Activated CD4-positive, alpha-beta memory T cell treated with anti-CD3 and anti-CD28 coated beads, Interleukin-2, amount 10 ng/mL, durations not matched to agents 7 days and 5 days (primary cell): ENCODE measurements at regions of chr19 and their contacts with region 1.

Region 1: DNA sequence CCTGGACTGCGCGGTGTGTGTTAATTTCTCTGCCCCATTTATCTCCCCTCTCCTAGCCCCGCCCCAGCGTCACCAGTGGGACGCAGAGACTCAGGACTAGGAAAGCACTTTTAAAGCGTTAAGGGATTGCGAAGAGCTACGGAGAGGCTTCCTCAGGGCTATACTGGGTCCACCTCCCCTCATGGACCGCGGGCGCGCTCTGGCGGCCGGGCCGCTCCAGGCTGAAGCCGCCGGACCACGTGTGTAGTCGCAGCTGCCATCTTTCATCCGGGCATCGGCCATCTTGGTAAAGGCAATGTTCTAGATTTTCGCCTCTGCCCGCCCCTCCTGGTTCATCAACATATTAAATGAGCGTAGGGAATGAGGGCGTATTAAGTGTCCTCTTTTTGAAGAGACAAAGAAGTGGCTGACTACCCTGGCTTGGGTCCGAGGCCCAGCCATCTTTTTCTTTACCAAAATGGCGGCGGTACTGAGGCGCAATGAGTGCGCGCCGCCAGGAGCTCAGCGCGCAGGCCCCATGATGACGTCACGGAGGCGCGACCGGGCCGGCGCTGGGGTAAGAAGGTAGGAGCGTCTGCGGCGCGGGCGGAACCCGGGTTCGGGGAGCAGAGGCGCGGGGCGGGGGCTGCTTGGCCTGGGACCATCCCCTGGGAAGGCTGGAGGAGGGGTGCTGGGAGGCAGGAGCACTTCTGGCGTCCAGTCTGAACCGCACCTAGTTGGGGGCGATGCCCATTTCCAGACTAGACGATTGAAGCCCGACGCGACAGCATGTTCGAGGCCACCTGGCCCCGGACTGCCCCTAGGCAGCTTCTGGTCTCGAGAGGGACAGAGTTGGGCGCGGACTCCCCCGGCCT is at the start of gene CCDC124:
- DNase-seq: peak; percentile 95
- H3K4me3 Mint-ChIP-seq: peak within 1 kb of the TSS; percentile 81
- H3K27ac Mint-ChIP-seq: peak within 1 kb of the TSS; percentile 87
- H3K4me1 Mint-ChIP-seq: peaks cover 36% of the 10 kb centered on the region
- H3K27me3 Mint-ChIP-seq: no peaks in the 10 kb centered on the region
- total RNA-seq, gene CCDC124: 59.3 to 60.8 TPM

Region 2: DNA sequence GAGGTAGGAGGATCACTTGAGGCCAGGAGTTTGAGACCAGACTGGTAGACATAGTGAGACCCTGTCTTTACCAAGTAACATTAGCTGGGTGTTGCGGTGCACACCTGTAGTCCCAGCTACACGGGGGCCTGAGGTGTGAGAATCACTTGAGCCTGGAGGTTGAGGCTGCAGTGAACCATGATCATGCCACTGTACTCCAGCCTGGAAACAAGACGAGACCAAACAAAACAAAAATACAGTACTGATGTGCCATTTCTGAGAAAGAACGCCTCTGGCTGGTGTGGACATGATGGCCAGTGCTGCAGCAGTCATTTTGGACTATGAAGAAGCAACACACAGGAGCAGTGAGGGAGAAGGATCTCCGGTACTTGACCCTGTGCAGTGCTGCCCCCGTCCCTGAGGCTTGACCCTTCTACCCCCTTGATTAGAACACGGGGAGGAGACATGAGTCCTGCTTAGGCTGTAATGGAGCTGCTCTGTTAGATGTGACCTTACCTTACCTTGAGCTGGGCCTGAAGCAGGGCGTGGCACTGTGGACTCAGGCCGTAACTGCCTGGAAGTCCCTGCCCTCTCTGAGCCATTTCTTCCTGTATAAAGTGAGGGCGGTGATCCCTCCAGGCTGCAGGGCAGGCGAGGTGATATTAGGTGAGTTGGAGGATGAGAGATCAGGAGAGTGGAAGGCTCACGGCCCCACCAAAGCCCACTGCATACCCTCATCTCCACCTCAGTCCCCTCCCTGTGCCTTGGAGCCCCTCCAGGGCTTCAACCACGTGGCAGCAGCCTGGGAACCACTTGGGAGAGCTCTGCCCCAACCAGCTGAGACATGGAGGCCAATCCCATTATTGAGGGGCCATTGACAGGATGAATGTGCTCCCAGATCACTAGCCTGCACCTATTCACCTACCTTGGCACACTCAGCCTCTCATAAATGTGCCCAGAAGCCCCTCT is 67.1 kb before region 1 on chr19:
- CTCF ChIA-PET with region 1: interaction called, 313 read pairs
- POLR2A ChIA-PET with region 1: interaction called, 131 read pairs
- DNase-seq: no peak
- H3K4me3 Mint-ChIP-seq: no peak overlapping the region
- H3K27ac Mint-ChIP-seq: peak overlapping the region; percentile 34
- H3K4me1 Mint-ChIP-seq: peaks cover 33% of the 10 kb centered on the region
- H3K27me3 Mint-ChIP-seq: no peaks in the 10 kb centered on the region

Region 3: DNA sequence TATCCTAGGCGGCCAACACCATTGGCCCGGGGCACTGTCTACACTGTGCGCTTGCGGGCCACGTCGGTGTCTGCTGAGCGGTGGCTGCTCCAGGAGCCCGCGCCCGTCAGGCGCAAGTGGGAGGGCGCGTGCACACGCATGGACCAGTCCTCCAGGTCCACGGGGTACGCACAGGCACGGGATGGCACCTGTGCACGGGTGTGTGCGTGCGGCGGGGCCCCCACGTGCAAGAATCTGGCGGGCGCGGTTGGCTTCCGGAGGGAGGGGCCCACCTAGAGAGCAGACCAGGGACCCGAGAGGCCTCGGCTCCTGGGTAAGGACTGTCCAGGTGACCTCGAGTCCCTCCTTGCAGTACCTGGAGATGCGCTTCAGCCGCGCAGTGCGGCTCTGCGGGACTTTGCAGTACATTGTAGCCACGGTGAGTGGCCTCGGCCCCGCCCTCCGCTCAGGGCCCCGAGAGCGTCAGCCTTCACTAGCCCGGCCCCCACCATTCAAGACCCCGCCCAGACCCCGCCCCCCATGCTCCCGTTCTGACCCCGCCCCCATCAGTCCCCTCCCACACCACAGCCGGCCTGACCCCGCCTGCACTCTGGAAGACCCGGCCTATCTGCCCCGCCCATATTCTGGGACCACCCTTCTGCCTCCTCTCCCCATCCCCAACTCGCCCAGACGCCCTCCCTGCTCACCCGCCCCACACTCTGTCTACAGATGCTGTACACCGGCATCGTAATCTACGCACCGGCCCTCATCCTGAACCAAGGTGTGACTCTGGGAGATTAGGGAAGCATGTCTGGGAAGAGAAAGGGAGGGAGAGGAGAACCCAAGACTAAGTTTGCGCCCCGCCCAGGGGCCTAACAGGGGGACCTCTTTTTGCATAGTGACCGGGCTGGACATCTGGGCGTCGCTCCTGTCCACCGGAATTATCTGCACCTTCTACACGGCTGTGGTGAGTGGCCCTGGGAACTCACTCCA is 58.6 kb before region 1 on chr19:
- CTCF ChIA-PET with region 1: interaction called, 25 read pairs
- POLR2A ChIA-PET with region 1: interaction called, 22 read pairs
- DNase-seq: peak; percentile 75
- H3K4me3 Mint-ChIP-seq: peak overlapping the region; percentile 89
- H3K27ac Mint-ChIP-seq: no peak overlapping the region
- H3K4me1 Mint-ChIP-seq: peaks cover 27% of the 10 kb centered on the region
- H3K27me3 Mint-ChIP-seq: no peaks in the 10 kb centered on the region

Region 4: GRCh38 chr19:17893766-17894165 is 38.9 kb before region 1 on chr19:
- CTCF ChIA-PET with region 1: no interaction called
- POLR2A ChIA-PET with region 1: no interaction called
- DNase-seq: no peak
- H3K4me3 Mint-ChIP-seq: no peak overlapping the region
- H3K27ac Mint-ChIP-seq: no peak overlapping the region
- H3K4me1 Mint-ChIP-seq: no peaks in the 10 kb centered on the region
- H3K27me3 Mint-ChIP-seq: no peaks in the 10 kb centered on the region

Region 5: DNA sequence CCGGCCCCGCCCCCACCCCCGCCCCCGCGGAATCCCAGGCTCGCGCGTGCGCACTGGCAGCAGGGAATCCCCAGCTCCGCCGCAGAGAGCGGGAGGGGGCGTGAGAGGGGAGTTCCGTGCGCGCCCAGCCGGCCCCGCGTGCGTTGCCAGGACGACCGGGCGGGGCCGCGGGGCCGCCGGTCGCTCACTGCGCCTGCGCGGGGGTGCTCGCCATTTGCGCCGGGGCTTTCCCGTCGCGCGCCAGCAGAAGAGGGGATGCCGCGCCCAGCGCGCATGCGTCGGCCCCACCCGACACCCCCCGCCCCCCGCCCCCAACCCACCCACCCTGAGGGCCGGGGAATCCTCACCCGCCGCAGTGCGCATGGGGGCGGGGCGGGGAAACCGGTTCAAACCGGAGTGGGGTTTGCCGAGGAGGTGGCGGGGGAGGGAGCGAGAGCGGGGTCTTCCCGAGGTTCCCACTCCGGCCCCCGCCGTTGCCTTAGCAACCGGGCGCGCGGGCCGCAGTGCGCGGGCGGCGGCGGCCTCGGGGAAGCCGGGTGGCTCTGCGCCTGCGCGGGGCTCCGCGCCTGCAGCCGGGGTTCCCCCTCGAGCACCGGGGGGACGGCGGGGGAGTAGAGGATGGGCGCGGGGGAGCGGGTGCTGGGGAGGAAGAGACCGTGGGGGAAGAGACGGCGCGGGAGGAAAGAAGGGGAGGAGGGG is 15.3 kb after region 1 on chr19:
- CTCF ChIA-PET with region 1: interaction called, 17 read pairs
- POLR2A ChIA-PET with region 1: interaction called, 10 read pairs
- DNase-seq: peak; percentile 95
- H3K4me3 Mint-ChIP-seq: peak overlapping the region; percentile 76
- H3K27ac Mint-ChIP-seq: no peak overlapping the region
- H3K4me1 Mint-ChIP-seq: peaks cover 38% of the 10 kb centered on the region
- H3K27me3 Mint-ChIP-seq: peaks cover 38% of the 10 kb centered on the region

Region 6: GRCh38 chr19:17985037-17985818 is 52.5 kb after region 1 on chr19:
- CTCF ChIA-PET with region 1: no interaction called
- POLR2A ChIA-PET with region 1: no interaction called
- DNase-seq: no peak
- H3K4me3 Mint-ChIP-seq: no peak overlapping the region
- H3K27ac Mint-ChIP-seq: no peak overlapping the region
- H3K4me1 Mint-ChIP-seq: peaks cover 2% of the 10 kb centered on the region
- H3K27me3 Mint-ChIP-seq: peaks cover 5% of the 10 kb centered on the region